Endothelial cell of umbilical vein (primary cell): ENCODE measurements at regions of chr3 and their contacts with region 1.

Region 1: GRCh38 chr3:149615731-149616221 is 42.0 kb downstream of the WWTR1 start:
- DNase-seq: peak; percentile 99
- H3K4me3 ChIP-seq: no peak overlapping the region
- H3K27ac ChIP-seq: peak overlapping the region; percentile 99
- H3K4me1 ChIP-seq: peaks cover 96% of the 10 kb centered on the region
- H3K27me3 ChIP-seq: no peaks in the 10 kb centered on the region
- CTCF ChIP-seq: no peak
- POLR2A ChIP-seq: peak; percentile 86

Region 2: DNA sequence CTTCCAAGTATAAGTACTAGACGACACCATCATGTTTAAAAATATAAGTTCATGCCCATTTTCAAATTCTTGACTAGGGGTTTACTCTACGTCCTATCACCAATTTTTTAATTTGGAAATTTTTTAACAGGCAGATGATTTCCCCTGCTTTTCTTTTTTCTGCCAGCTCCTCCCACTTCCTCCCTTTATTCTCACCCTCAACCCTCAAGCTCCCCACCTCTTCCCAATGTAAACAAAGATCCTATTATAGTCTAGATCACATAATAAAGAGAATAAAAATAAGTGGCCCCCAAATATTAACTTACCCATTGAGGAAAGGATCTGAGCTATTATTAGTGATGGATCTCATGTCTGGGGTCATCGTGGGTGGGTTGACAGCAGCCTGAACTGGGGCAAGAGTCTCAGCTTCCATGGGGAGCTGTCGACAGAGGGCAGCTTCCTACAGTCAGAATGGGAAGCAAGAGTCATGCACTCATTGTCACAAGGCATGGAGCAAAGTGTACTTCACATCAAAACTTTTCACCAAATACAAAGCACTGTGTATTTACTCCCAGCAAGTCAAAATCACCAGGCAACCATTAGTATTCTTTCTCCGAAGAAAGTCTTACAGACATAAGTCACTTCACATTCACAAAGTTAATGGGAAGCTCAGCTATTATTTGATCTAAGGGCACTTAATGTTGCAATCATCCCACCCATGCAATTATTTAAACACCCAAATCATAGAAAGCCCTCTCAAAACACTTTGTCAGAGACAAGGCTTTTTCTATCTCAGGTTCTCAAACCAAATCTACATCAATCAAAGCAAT is 88.0 kb before region 1 on chr3:
- CTCF ChIA-PET with region 1: interaction called, 5 read pairs
- POLR2A ChIA-PET with region 1: interaction called, 4 read pairs
- dilution Hi-C with region 1: no loop called
- intact Hi-C with region 1: loop called (anchors 1 kb)
- DNase-seq: peak; percentile 85
- H3K4me3 ChIP-seq: no peak overlapping the region
- H3K27ac ChIP-seq: peak overlapping the region; percentile 62
- H3K4me1 ChIP-seq: peaks cover 43% of the 10 kb centered on the region
- H3K27me3 ChIP-seq: no peaks in the 10 kb centered on the region
- CTCF ChIP-seq: peak in 1 of 2 donors; percentile 50
- POLR2A ChIP-seq: no peak

Region 3: GRCh38 chr3:149553781-149554451 is 61.9 kb before region 1 on chr3:
- CTCF ChIA-PET with region 1: interaction called, 3 read pairs
- POLR2A ChIA-PET with region 1: no interaction called
- dilution Hi-C with region 1: no loop called
- intact Hi-C with region 1: loop called (anchors 1 kb)
- DNase-seq: peak; percentile 85
- H3K4me3 ChIP-seq: peak overlapping the region in 1 of 3 experiments; percentile 13
- H3K27ac ChIP-seq: peak overlapping the region; percentile 88
- H3K4me1 ChIP-seq: peaks cover 46% of the 10 kb centered on the region
- H3K27me3 ChIP-seq: no peaks in the 10 kb centered on the region
- CTCF ChIP-seq: no peak
- POLR2A ChIP-seq: no peak

Region 4: GRCh38 chr3:149589332-149589731 is 26.4 kb before region 1 on chr3:
- CTCF ChIA-PET with region 1: interaction called, 3 read pairs
- POLR2A ChIA-PET with region 1: no interaction called
- dilution Hi-C with region 1: no loop called
- intact Hi-C with region 1: loop called (anchors 1 kb)
- DNase-seq: peak; percentile 95
- H3K4me3 ChIP-seq: peak overlapping the region in 1 of 3 experiments; percentile 10
- H3K27ac ChIP-seq: peak overlapping the region; percentile 96
- H3K4me1 ChIP-seq: peaks cover 96% of the 10 kb centered on the region
- H3K27me3 ChIP-seq: no peaks in the 10 kb centered on the region
- CTCF ChIP-seq: no peak
- POLR2A ChIP-seq: peak; percentile 38

Region 5: GRCh38 chr3:149648525-149648924 is 32.7 kb after region 1 on chr3:
- CTCF ChIA-PET with region 1: interaction called, 5 read pairs
- POLR2A ChIA-PET with region 1: interaction called, 4 read pairs
- dilution Hi-C with region 1: no loop called
- intact Hi-C with region 1: loop called (anchors 1 kb)
- DNase-seq: peak; percentile 80
- H3K4me3 ChIP-seq: peak overlapping the region in 1 of 3 experiments; percentile 13
- H3K27ac ChIP-seq: peak overlapping the region; percentile 37
- H3K4me1 ChIP-seq: peaks cover 88% of the 10 kb centered on the region
- H3K27me3 ChIP-seq: no peaks in the 10 kb centered on the region
- CTCF ChIP-seq: no peak
- POLR2A ChIP-seq: peak; percentile 68